CD4-positive, alpha-beta memory T cell (primary cell): ENCODE measurements at regions of chr12 and their contacts with region 1.

Region 1: DNA sequence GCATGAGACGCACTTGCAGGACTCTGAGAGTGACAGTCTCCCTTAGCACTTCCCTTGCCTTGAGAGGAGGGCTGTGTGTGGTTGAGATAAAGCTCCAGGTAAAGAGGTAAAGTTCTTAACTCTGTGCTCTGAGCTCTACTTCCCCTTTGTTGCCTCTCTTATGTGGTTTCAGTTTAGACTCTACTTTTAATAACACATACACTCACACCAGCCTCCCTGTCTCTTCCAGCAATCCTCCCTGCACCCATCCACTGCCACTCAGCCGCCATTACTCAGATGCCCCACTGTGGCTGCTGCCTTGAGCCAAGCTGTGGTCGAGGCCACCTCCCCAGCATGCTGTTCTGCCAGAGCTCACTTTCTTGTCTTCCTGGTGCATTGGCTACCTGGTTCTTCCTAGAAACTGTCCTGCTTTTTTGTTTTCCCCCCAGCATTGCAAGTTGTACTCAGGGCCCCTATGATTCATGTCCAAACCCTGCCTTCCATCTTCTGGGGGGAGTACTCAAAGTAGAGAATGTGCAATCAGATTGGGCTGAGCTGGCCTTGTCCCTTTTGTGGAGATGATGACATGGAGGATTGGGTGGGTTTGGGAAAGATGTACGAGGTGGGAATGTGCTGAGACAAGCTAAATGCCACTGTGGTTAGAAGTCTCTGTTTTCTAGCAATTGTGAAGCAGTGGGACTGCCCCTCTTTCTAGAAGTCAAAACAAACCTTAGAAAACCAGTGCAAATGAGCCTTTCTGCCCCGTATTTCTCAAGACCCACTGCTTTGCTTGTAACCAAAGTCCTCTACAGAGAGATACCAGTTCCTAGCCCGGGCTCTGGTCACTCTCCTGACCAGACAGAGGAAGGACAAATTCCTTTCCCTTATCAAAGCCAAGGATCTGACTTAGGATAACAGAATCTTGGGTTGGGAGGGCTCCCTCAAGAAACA is 115.6 kb upstream of the PARP11 start:
- DNase-seq: peak in 4 of 5 donors; percentile 40 to 50 (median 43)
- H3K4me3 ChIP-seq: peak overlapping the region in 1 of 2 donors; percentile 2
- H3K4me3 Mint-ChIP-seq: peak overlapping the region in 7 of 8 donors; percentile 45 to 88 (median 66)
- H3K27ac ChIP-seq: peak overlapping the region; percentile 6
- H3K27ac Mint-ChIP-seq: peak overlapping the region; percentile 56 to 94 (median 90)
- H3K4me1 ChIP-seq: peaks cover 24% of the 10 kb centered on the region
- H3K4me1 Mint-ChIP-seq: peaks cover 18 to 33% (median 25%) of the 10 kb centered on the region in 4 donors
- H3K27me3 ChIP-seq: no peaks in the 10 kb centered on the region
- H3K27me3 Mint-ChIP-seq: peaks cover 0 to 2% of the 10 kb centered on the region in 2 donors

Region 2: DNA sequence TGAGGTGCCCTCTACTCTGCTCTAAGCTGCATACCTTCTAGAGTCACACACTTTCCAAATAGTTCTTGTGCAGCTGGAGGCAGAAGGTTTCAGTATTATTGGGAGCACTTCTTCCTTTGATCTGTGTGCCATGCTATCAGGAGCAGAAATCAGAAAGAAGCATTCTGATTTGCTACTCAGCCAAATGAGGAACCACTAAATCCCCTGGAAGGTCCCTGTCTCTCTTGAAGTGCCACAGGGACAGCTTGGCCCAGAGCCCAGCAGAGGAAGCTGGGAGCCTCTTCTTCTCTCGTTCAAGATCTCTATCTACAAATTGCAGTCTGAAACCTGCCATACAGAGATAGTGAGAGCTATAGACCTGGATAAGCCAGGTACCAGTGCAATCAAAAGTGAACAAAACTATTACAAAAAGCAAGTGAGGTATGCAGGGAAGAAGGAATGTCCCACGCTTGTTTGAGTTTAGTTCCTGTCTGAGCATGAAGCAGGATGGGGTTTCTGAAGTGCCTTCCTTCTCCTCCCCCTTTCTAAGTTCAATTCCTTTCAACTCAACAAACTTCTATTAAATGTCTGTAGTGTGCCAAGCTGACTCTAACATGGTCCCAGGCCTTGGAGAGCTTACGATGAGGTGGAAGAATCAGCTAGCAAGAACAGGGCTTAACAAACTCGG is 14.7 kb before region 1 on chr12:
- CTCF ChIA-PET with region 1: interaction called, 35 read pairs
- POLR2A ChIA-PET with region 1: interaction called, 28 read pairs
- intact Hi-C with region 1: loop called (anchors 2 kb)
- DNase-seq: peak in 3 of 5 donors; percentile 20 to 46 (median 21)
- H3K4me3 ChIP-seq: peak overlapping the region in 1 of 2 donors; percentile 8
- H3K4me3 Mint-ChIP-seq: peak overlapping the region; percentile 5 to 83 (median 74)
- H3K27ac ChIP-seq: peak overlapping the region; percentile 43
- H3K27ac Mint-ChIP-seq: peak overlapping the region; percentile 75 to 93 (median 90)
- H3K4me1 ChIP-seq: peaks cover 57% of the 10 kb centered on the region
- H3K4me1 Mint-ChIP-seq: peaks cover 39 to 64% (median 51%) of the 10 kb centered on the region in 4 donors
- H3K27me3 ChIP-seq: no peaks in the 10 kb centered on the region
- H3K27me3 Mint-ChIP-seq: no peaks in the 10 kb centered on the region

Region 3: GRCh38 chr12:3998968-3999826 is 10.4 kb after region 1 on chr12:
- CTCF ChIA-PET with region 1: interaction called, 10 read pairs
- POLR2A ChIA-PET with region 1: interaction called, 6 read pairs
- intact Hi-C with region 1: no loop called
- DNase-seq: peak; percentile 39 to 60 (median 55)
- H3K4me3 ChIP-seq: no peak overlapping the region
- H3K4me3 Mint-ChIP-seq: peak overlapping the region in 1 of 8 donors; percentile 15
- H3K27ac ChIP-seq: no peak overlapping the region
- H3K27ac Mint-ChIP-seq: peak overlapping the region in 6 of 7 donors; percentile 70 to 87 (median 84)
- H3K4me1 ChIP-seq: peaks cover 9% of the 10 kb centered on the region
- H3K4me1 Mint-ChIP-seq: peaks cover 7 to 30% (median 20%) of the 10 kb centered on the region in 4 donors
- H3K27me3 ChIP-seq: no peaks in the 10 kb centered on the region
- H3K27me3 Mint-ChIP-seq: no peaks in the 10 kb centered on the region